Naive thymus-derived CD4-positive, alpha-beta T cell (primary cell): ENCODE measurements at regions of chr19 and their contacts with region 1.

Region 1: GRCh38 chr19:13880059-13881043 is 3.4 kb downstream of the NANOS3 start:
- DNase-seq: peak; percentile 89 to 99 (median 93)
- ATAC-seq: peak; percentile 99
- H3K4me3 ChIP-seq: peak overlapping the region; percentile 49
- H3K4me3 Mint-ChIP-seq: peak overlapping the region; percentile 49 to 89 (median 66)
- H3K27ac ChIP-seq: peak overlapping the region; percentile 48
- H3K27ac Mint-ChIP-seq: peak overlapping the region in 8 of 9 donors; percentile 12 to 86 (median 70)
- H3K4me1 ChIP-seq: peaks cover 36 to 38% of the 10 kb centered on the region in 2 donors
- H3K4me1 Mint-ChIP-seq: peaks cover 6 to 43% (median 34%) of the 10 kb centered on the region in 7 donors
- H3K27me3 ChIP-seq: no peaks in the 10 kb centered on the region
- H3K27me3 Mint-ChIP-seq: no peaks in the 10 kb centered on the region

Region 2: DNA sequence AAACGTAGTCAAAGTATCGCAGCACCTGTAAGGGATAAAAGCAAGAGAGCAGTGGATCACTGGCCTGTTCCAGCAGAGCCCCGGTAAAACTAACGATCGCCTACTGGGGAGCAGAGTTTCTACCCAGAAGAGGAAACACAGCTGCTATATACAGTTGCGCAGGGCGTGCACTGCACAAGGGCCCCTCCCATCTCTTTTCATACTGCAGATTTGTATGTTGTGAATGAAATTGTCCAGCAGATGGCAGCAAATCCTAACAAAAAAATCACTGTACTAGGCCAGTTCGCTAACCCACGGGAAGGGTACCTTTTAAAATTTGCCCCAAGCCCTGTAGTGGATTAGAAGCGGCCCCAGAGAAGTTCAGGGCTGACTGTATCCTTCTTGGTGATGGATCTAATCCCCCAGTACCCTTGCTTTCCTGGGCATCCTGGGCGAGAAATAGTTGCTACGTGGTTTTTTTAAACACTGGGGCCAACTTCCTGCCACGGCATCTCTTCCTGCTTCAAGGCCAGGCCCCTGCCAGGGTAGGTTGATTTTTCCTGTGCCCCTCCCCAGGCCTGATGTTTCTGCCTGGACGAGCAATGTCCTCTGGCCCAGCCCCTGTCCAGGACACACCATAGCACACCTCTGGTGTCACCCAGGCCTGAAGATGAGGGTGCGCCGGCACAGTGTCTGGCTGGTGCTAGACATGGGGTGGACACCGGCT is 603.1 kb before region 1 on chr19:
- CTCF ChIA-PET with region 1: no interaction called
- POLR2A ChIA-PET with region 1: no interaction called
- intact Hi-C with region 1: loop called in 1 of 2 experiments (anchors 5 kb)
- DNase-seq: peak; percentile 23 to 84 (median 79)
- ATAC-seq: peak; percentile 93
- H3K4me3 ChIP-seq: peak overlapping the region; percentile 41
- H3K4me3 Mint-ChIP-seq: peak overlapping the region; percentile 39 to 75 (median 64)
- H3K27ac ChIP-seq: peak overlapping the region; percentile 60
- H3K27ac Mint-ChIP-seq: peak overlapping the region; percentile 47 to 91 (median 84)
- H3K4me1 ChIP-seq: peaks cover 7% of the 10 kb centered on the region in 2 donors
- H3K4me1 Mint-ChIP-seq: peaks cover 8 to 33% (median 18%) of the 10 kb centered on the region in 7 donors
- H3K27me3 ChIP-seq: no peaks in the 10 kb centered on the region
- H3K27me3 Mint-ChIP-seq: peaks cover 0 to 10% (median 5%) of the 10 kb centered on the region in 5 donors

Region 3: GRCh38 chr19:13925990-13926389 is 45.6 kb after region 1 on chr19:
- CTCF ChIA-PET with region 1: no interaction called
- POLR2A ChIA-PET with region 1: no interaction called
- intact Hi-C with region 1: no loop called
- DNase-seq: no peak
- ATAC-seq: no peak
- H3K4me3 ChIP-seq: no peak overlapping the region
- H3K4me3 Mint-ChIP-seq: no peak overlapping the region
- H3K27ac ChIP-seq: no peak overlapping the region
- H3K27ac Mint-ChIP-seq: peak overlapping the region in 2 of 9 donors; percentile 20 to 62
- H3K4me1 ChIP-seq: no peaks in the 10 kb centered on the region
- H3K4me1 Mint-ChIP-seq: peaks cover 0 to 15% (median 6%) of the 10 kb centered on the region in 7 donors
- H3K27me3 ChIP-seq: no peaks in the 10 kb centered on the region
- H3K27me3 Mint-ChIP-seq: no peaks in the 10 kb centered on the region

Region 4: DNA sequence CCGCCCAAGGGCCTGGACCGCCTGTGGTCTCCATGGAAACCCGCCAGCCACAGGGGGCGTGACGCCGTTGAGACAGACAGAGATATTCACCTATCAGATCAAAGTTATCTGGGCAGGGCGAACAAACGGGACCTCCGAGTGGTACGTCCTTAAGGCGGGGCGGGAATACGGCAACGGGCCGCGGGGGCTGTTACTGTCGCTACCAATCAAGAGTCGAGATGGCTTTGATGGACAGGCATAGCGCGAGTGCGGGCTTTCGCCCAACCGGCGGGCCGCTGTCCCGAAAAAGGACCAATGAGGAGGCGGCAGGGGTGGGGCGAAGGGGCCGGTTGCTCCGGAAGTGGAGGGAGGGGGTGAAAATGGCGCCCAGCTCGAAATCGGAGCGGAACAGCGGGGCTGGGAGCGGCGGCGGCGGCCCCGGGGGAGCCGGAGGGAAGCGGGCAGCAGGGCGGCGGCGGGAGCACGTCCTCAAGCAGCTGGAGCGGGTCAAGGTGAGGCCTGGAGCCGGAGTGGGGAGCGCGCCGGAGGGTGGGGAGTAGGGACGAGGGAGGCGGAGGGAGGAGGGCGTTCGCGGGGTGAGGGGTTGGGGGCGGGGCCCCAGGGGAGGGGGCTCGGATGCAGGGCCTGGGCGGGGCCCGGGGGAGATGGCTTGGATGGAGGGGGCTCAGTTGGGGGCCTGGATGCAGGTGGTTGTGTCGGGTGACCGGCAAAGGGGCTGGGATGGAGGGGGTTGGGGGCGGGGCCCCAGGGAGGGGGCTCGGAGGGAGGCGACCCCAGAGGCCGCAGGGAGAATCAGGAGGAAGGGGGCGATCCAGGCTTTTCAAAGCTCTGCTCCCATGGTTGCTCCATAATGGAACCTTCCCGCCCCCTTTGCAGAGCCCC is 72.0 kb after region 1 on chr19 and contains the start of gene DCAF15:
- CTCF ChIA-PET with region 1: no interaction called
- POLR2A ChIA-PET with region 1: interaction called, 4 read pairs
- intact Hi-C with region 1: loop called (anchors 1 kb)
- DNase-seq: peak; percentile 89 to 99 (median 99)
- ATAC-seq: peak; percentile 98
- H3K4me3 ChIP-seq: peak within 1 kb of the TSS; percentile 75
- H3K4me3 Mint-ChIP-seq: peak within 1 kb of the TSS; percentile 74 to 99 (median 93)
- H3K27ac ChIP-seq: peak within 1 kb of the TSS; percentile 90
- H3K27ac Mint-ChIP-seq: peak within 1 kb of the TSS; percentile 86 to 99 (median 91)
- H3K4me1 ChIP-seq: peaks cover 13 to 17% of the 10 kb centered on the region in 2 donors
- H3K4me1 Mint-ChIP-seq: peaks cover 5 to 24% (median 19%) of the 10 kb centered on the region in 7 donors
- H3K27me3 ChIP-seq: no peaks in the 10 kb centered on the region
- H3K27me3 Mint-ChIP-seq: no peaks in the 10 kb centered on the region
- total RNA-seq, gene DCAF15: 68.5 to 92.0 (median 87.2) TPM

Region 5: GRCh38 chr19:14031719-14032480 is 151.5 kb after region 1 on chr19 and contains the start of gene IL27RA:
- CTCF ChIA-PET with region 1: no interaction called
- POLR2A ChIA-PET with region 1: interaction called, 13 read pairs
- intact Hi-C with region 1: loop called (anchors 1 kb)
- DNase-seq: peak; percentile 71 to 89 (median 87)
- ATAC-seq: peak; percentile 85
- H3K4me3 ChIP-seq: peak within 1 kb of the TSS; percentile 98
- H3K4me3 Mint-ChIP-seq: peak within 1 kb of the TSS; percentile 88 to 97 (median 94)
- H3K27ac ChIP-seq: peak within 1 kb of the TSS; percentile 99
- H3K27ac Mint-ChIP-seq: peak within 1 kb of the TSS; percentile 92 to 97 (median 95)
- H3K4me1 ChIP-seq: peaks cover 16% of the 10 kb centered on the region in 2 donors
- H3K4me1 Mint-ChIP-seq: peaks cover 21 to 52% (median 36%) of the 10 kb centered on the region in 7 donors
- H3K27me3 ChIP-seq: no peaks in the 10 kb centered on the region
- H3K27me3 Mint-ChIP-seq: peaks cover 0 to 1% (median 0%) of the 10 kb centered on the region in 5 donors
- total RNA-seq, gene IL27RA: 32.1 to 118 (median 83.2) TPM

Region 6: GRCh38 chr19:14081325-14082093 is 201.2 kb after region 1 on chr19:
- CTCF ChIA-PET with region 1: interaction called, 18 read pairs
- POLR2A ChIA-PET with region 1: interaction called, 3 read pairs
- intact Hi-C with region 1: no loop called
- DNase-seq: peak; percentile 96 to 100 (median 99)
- ATAC-seq: peak; percentile 97
- H3K4me3 ChIP-seq: peak overlapping the region; percentile 86
- H3K4me3 Mint-ChIP-seq: peak overlapping the region; percentile 80 to 98 (median 94)
- H3K27ac ChIP-seq: peak overlapping the region; percentile 80
- H3K27ac Mint-ChIP-seq: peak overlapping the region; percentile 86 to 98 (median 95)
- H3K4me1 ChIP-seq: peaks cover 5 to 15% of the 10 kb centered on the region in 2 donors
- H3K4me1 Mint-ChIP-seq: peaks cover 0 to 27% (median 17%) of the 10 kb centered on the region in 7 donors
- H3K27me3 ChIP-seq: no peaks in the 10 kb centered on the region
- H3K27me3 Mint-ChIP-seq: no peaks in the 10 kb centered on the region

Region 7: GRCh38 chr19:14347999-14348889 is 467.9 kb after region 1 on chr19:
- CTCF ChIA-PET with region 1: no interaction called
- POLR2A ChIA-PET with region 1: no interaction called
- intact Hi-C with region 1: loop called in 1 of 2 experiments (anchors 1 kb)
- DNase-seq: peak; percentile 43 to 81 (median 59)
- ATAC-seq: peak; percentile 84
- H3K4me3 ChIP-seq: no peak overlapping the region
- H3K4me3 Mint-ChIP-seq: peak overlapping the region; percentile 19 to 82 (median 66)
- H3K27ac ChIP-seq: peak overlapping the region; percentile 38
- H3K27ac Mint-ChIP-seq: peak overlapping the region in 4 of 9 donors; percentile 51 to 80 (median 64)
- H3K4me1 ChIP-seq: peaks cover 8 to 12% of the 10 kb centered on the region in 2 donors
- H3K4me1 Mint-ChIP-seq: peaks cover 9 to 25% (median 19%) of the 10 kb centered on the region in 7 donors
- H3K27me3 ChIP-seq: no peaks in the 10 kb centered on the region
- H3K27me3 Mint-ChIP-seq: no peaks in the 10 kb centered on the region